Mucosa of descending colon (tissue), 3 donors: ENCODE measurements at regions of chr14 and their contacts with region 1.

Region 1: GRCh38 chr14:75654127-75654732 is 6.4 kb downstream of the ERG28 start:
- DNase-seq: peak; percentile 68 to 89 (median 87)
- ATAC-seq: peak; percentile 94
- H3K4me3 ChIP-seq: no peak overlapping the region
- H3K4me1 ChIP-seq: no peaks in the 10 kb centered on the region
- CTCF ChIP-seq: peak; percentile 94

Region 2: DNA sequence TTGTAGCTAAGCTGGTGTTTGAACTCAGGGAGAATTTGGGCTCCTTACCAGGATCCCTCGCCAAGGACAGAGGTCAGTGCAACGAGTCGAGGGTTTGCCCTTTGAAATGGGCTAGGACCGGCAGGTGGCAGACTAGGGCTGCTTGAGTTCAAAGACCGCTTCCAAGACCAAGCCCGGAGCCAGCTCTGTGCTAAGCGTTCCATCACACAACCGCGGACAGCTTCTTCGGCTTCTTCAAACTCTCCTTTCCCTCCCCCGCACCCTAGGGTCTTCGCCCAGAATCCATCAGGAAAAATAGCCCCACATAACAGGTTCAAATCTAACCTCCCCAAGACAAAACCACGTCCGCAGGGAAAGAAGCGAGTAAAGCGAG is 76.5 kb before region 1 on chr14:
- intact Hi-C with region 1: loop called (anchors 2 to 5 kb)
- DNase-seq: peak; percentile 86 to 94 (median 88)
- ATAC-seq: peak; percentile 76
- H3K4me3 ChIP-seq: no peak overlapping the region
- H3K4me1 ChIP-seq: peaks cover 21% of the 10 kb centered on the region
- CTCF ChIP-seq: peak; percentile 48